Tibial artery (tissue), 4 donors: ENCODE measurements at regions of chr22 and their contacts with region 1.

Region 1: GRCh38 chr22:50244420-50245213 is at the start of gene TUBGCP6:
- DNase-seq: peak; percentile 95 to 96
- H3K4me3 ChIP-seq: peak within 1 kb of the TSS; percentile 77 to 95
- H3K27ac ChIP-seq: peak within 1 kb of the TSS; percentile 90
- H3K4me1 ChIP-seq: peaks cover 0 to 64% (median 45%) of the 10 kb centered on the region in 4 donors
- H3K27me3 ChIP-seq: no peaks in the 10 kb centered on the region
- CTCF ChIP-seq: peak; percentile 22 to 23

Region 2: GRCh38 chr22:50341977-50342650 is 97.5 kb after region 1 on chr22:
- intact Hi-C with region 1: loop called (anchors 2 kb)
- DNase-seq: peak; percentile 91 to 92
- H3K4me3 ChIP-seq: peak overlapping the region; percentile 99
- H3K27ac ChIP-seq: peak overlapping the region in 1 of 2 donors; percentile 88
- H3K4me1 ChIP-seq: peaks cover 0 to 22% (median 14%) of the 10 kb centered on the region in 4 donors
- H3K27me3 ChIP-seq: no peaks in the 10 kb centered on the region
- CTCF ChIP-seq: peak; percentile 94 to 98

Region 3: GRCh38 chr22:50481440-50482106 is 237.0 kb after region 1 on chr22 and contains the start of gene ADM2:
- intact Hi-C with region 1: no loop called
- DNase-seq: no peak
- H3K4me3 ChIP-seq: peak within 1 kb of the TSS; percentile 30 to 44
- H3K27ac ChIP-seq: no peak within 1 kb of the TSS
- H3K4me1 ChIP-seq: peaks cover 0 to 16% (median 8%) of the 10 kb centered on the region in 4 donors
- H3K27me3 ChIP-seq: peaks cover 15 to 72% of the 10 kb centered on the region in 2 donors
- CTCF ChIP-seq: no peak

Region 4: GRCh38 chr22:50507991-50508884 is 263.6 kb after region 1 on chr22 and contains the start of gene NCAPH2:
- intact Hi-C with region 1: loop called (anchors 10 kb)
- DNase-seq: peak; percentile 92 to 97
- H3K4me3 ChIP-seq: peak within 1 kb of the TSS; percentile 88 to 99
- H3K27ac ChIP-seq: peak within 1 kb of the TSS; percentile 92 to 94
- H3K4me1 ChIP-seq: peaks cover 0 to 37% (median 19%) of the 10 kb centered on the region in 4 donors
- H3K27me3 ChIP-seq: no peaks in the 10 kb centered on the region
- CTCF ChIP-seq: peak in 1 of 2 experiments; percentile 8